Activated B cell treated with CpG ODN at 0.5 μM for 24 hours (primary cell): ENCODE measurements at regions of chr19 and their contacts with region 1.

Region 1: DNA sequence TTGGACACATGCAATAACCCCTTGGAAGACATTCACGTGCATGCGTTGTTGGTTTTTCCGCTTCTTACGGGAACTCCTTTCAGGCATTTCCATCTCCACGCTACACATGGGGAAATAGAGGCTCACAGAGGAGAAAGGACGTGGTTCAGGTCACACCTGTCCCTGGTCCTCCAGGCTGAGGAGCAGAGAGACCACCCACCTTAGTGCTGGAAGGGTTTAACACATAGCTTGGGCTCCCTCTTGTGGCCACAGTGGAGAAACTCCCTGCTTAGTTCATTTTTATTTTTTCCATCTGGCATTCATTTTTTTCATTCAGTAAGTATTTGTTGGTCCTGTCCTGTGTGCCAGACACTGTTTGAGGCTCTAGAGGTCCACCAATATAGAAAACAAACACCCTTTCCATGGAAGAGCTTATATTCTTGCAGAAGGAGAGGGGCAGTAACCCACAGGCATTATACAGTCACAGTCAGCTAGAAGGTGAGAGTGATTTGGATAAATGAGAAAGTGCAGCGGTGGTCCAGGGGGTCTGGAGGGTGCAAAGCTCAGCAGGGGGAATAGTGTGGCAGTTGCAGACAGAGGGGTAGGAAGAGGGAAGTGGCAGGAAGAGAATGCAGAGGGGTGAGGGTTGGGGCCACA is 24.2 kb upstream of the TTYH1 start:
- DNase-seq: peak; percentile 41
- ATAC-seq: peak; percentile 39
- H3K4me3 Mint-ChIP-seq: peak overlapping the region; percentile 70
- H3K27ac Mint-ChIP-seq: peak overlapping the region; percentile 75
- H3K4me1 Mint-ChIP-seq: peaks cover 50% of the 10 kb centered on the region
- H3K27me3 Mint-ChIP-seq: no peaks in the 10 kb centered on the region
- CTCF ChIP-seq: peak; percentile 81

Region 2: DNA sequence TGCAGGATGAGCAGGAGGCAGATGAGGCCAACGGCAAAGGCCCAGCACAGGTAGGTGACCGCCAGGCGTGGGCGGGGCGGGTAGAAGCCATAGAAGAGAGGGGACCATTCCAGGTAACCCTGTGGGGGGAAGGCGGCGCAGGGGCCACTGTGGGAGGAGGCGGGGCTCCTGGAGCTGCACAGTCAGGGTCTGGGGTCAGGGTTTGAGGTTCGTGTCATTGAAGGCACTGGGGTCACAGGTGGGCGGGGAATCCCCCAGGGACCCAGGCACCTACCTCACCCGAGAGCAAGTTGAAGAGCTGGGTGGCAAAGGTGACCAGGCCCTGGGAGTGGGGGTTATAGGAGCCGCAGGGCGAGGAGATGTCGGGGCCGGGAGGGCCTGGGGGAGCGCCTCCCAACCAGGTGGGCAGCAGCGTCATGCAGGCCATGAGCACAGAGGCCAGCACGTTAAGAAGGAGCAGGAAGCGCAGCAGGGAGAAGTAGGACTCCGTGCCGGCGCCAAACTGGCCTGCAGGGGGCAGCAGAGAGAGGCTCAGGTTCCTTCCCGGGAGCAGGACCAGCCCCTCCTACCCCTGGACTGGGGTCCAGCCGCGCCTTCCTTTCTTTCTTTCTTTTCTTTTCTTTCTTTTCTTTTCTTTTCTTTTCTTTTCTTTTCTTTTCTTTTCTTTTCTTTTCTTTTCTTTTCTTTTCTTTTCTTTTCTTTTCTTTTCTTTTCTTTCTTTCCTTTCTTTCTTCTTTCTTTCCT is 222.7 kb before region 1 on chr19:
- CTCF ChIA-PET with region 1: no interaction called
- POLR2A ChIA-PET with region 1: no interaction called
- intact Hi-C with region 1: loop called (anchors 2 kb)
- DNase-seq: peak; percentile 85
- ATAC-seq: peak; percentile 89
- H3K4me3 Mint-ChIP-seq: no peak overlapping the region
- H3K27ac Mint-ChIP-seq: no peak overlapping the region
- H3K4me1 Mint-ChIP-seq: peaks cover 24% of the 10 kb centered on the region
- H3K27me3 Mint-ChIP-seq: peaks cover 17% of the 10 kb centered on the region
- CTCF ChIP-seq: peak; percentile 71

Region 3: GRCh38 chr19:54316746-54317107 is 74.3 kb before region 1 on chr19:
- CTCF ChIA-PET with region 1: interaction called, 12 read pairs
- POLR2A ChIA-PET with region 1: interaction called, 5 read pairs
- intact Hi-C with region 1: no loop called
- DNase-seq: no peak
- ATAC-seq: no peak
- H3K4me3 Mint-ChIP-seq: no peak overlapping the region
- H3K27ac Mint-ChIP-seq: no peak overlapping the region
- H3K4me1 Mint-ChIP-seq: peaks cover 52% of the 10 kb centered on the region
- H3K27me3 Mint-ChIP-seq: peaks cover 13% of the 10 kb centered on the region
- CTCF ChIP-seq: no peak

Region 4: DNA sequence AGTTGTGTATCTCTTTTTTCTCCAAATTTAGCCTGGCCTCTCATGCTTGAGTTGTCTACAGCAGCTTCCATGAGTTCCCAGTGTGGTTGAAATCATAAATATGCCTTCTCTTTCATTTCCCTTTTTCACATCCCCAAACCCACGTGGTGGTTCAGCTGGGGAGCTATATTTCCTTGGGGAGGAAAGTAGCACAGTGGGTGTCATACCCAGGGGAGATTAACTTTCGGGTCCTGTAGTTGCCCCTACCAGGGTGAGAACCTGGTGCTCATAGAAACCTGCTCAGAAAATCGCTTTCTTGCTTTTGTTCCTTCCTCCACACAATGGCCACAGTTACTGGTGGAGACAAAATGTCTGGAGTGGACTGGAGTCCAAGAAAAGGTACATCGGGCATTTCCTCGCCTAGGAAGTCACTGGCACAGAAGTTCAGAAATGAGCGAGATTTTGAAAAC is 45.1 kb before region 1 on chr19:
- CTCF ChIA-PET with region 1: no interaction called
- POLR2A ChIA-PET with region 1: interaction called, 11 read pairs
- intact Hi-C with region 1: no loop called
- DNase-seq: peak; percentile 42
- ATAC-seq: peak; percentile 94
- H3K4me3 Mint-ChIP-seq: peak overlapping the region; percentile 81
- H3K27ac Mint-ChIP-seq: peak overlapping the region; percentile 91
- H3K4me1 Mint-ChIP-seq: peaks cover 89% of the 10 kb centered on the region
- H3K27me3 Mint-ChIP-seq: peaks cover 4% of the 10 kb centered on the region
- CTCF ChIP-seq: no peak

Region 5: DNA sequence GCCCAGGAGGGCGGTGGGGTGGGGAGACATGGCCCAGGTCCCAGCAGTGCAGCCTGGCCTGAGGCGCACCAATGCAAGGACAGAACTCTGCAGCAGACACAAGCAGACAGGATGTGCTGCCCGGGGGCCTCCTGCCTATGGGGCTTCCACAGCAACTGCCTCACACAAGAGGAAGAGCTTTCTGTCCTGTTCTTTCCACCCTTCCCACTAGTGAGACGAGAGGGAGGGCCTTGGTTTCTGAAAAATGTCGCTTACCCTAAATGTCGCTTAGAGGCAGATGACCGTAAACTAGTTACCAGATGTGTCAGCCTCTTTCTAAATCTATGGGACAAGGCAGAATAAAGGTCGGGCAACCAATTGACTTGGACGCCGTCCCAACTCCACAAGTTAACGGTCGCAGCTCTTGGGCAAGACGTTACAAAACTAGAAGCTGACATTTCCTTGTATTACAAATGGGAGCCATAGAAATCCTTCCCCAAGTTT is 26.2 kb before region 1 on chr19 and contains the start of gene LAIR1:
- CTCF ChIA-PET with region 1: interaction called, 9 read pairs
- POLR2A ChIA-PET with region 1: interaction called, 11 read pairs
- intact Hi-C with region 1: loop called (anchors 2 kb)
- DNase-seq: no peak
- ATAC-seq: peak; percentile 61
- H3K4me3 Mint-ChIP-seq: peak within 1 kb of the TSS; percentile 88
- H3K27ac Mint-ChIP-seq: peak within 1 kb of the TSS; percentile 90
- H3K4me1 Mint-ChIP-seq: peaks cover 88% of the 10 kb centered on the region
- H3K27me3 Mint-ChIP-seq: no peaks in the 10 kb centered on the region
- CTCF ChIP-seq: no peak
- total RNA-seq, gene LAIR1: 30.5 and 31.0 TPM in 2 replicates

Region 6: GRCh38 chr19:54379187-54379678 is 11.8 kb before region 1 on chr19:
- CTCF ChIA-PET with region 1: interaction called, 10 read pairs
- POLR2A ChIA-PET with region 1: interaction called, 18 read pairs
- intact Hi-C with region 1: loop called (anchors 1 kb)
- DNase-seq: no peak
- ATAC-seq: no peak
- H3K4me3 Mint-ChIP-seq: peak overlapping the region; percentile 36
- H3K27ac Mint-ChIP-seq: peak overlapping the region; percentile 83
- H3K4me1 Mint-ChIP-seq: peaks cover 63% of the 10 kb centered on the region
- H3K27me3 Mint-ChIP-seq: no peaks in the 10 kb centered on the region
- CTCF ChIP-seq: no peak